ENCODE measurements at regions of chrX and their contacts with region 1.

Region 1: DNA sequence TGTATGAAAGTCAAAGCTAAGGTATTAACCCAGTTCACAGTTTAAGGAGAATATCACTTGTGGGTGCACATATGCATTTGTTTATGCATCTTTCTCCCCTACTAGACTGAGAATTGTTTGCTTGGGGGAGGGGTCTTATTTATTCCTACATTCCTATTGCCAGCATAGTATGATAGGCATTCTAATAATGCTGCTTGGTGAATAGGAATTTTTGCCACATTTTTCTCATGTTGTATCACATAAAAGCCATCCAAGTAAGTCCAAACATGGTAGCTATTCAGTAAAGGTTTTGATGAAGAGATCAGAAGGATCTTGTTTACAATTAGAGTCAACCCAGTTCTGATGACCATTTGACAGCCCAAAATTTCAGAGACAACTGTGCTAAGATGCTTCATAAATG is 48.6 kb downstream of the ASB9 start:
- DNase-seq: no peak
- H3K4me3 ChIP-seq: no peak overlapping the region
- H3K27ac ChIP-seq: no peak overlapping the region
- H3K4me1 ChIP-seq: no peaks in the 10 kb centered on the region
- H3K27me3 ChIP-seq: no peaks in the 10 kb centered on the region
- CTCF ChIP-seq: no peak

Region 2: GRCh38 chrX:15277604-15278003 is 56.3 kb after region 1 on chrX:
- CTCF ChIA-PET with region 1: no interaction called
- POLR2A ChIA-PET with region 1: interaction called, 10 read pairs
- intact Hi-C with region 1: no loop called
- DNase-seq: no peak
- H3K4me3 ChIP-seq: no peak overlapping the region
- H3K27ac ChIP-seq: no peak overlapping the region
- H3K4me1 ChIP-seq: no peaks in the 10 kb centered on the region
- H3K27me3 ChIP-seq: no peaks in the 10 kb centered on the region
- CTCF ChIP-seq: no peak

Region 3: GRCh38 chrX:15299941-15300851 is 78.9 kb after region 1 on chrX:
- CTCF ChIA-PET with region 1: no interaction called
- POLR2A ChIA-PET with region 1: no interaction called
- intact Hi-C with region 1: no loop called
- DNase-seq: no peak
- H3K4me3 ChIP-seq: no peak overlapping the region
- H3K27ac ChIP-seq: no peak overlapping the region
- H3K4me1 ChIP-seq: peaks cover 5% of the 10 kb centered on the region
- H3K27me3 ChIP-seq: no peaks in the 10 kb centered on the region
- CTCF ChIP-seq: peak; percentile 75